Caco-2 (cell line): ENCODE measurements at regions of chr7 and their contacts with region 1.

Region 1: GRCh38 chr7:46432666-46433065 is 511.6 kb upstream of the IGFBP3 start:
- DNase-seq: no peak
- H3K4me3 ChIP-seq: no peak overlapping the region
- H3K4me3 Mint-ChIP-seq: no peak overlapping the region
- H3K27ac Mint-ChIP-seq: no peak overlapping the region
- H3K4me1 ChIP-seq: no peaks in the 10 kb centered on the region
- H3K4me1 Mint-ChIP-seq: no peaks in the 10 kb centered on the region
- H3K27me3 ChIP-seq: no peaks in the 10 kb centered on the region; the same call in 1 of the 2 replicates
- H3K27me3 Mint-ChIP-seq: no peaks in the 10 kb centered on the region
- CTCF ChIP-seq: no peak

Region 2: GRCh38 chr7:46244757-46245156 is 187.9 kb before region 1 on chr7:
- CTCF ChIA-PET with region 1: no interaction called
- POLR2A ChIA-PET with region 1: no interaction called
- intact Hi-C with region 1: no loop called
- DNase-seq: no peak
- H3K4me3 ChIP-seq: no peak overlapping the region
- H3K4me3 Mint-ChIP-seq: no peak overlapping the region
- H3K27ac Mint-ChIP-seq: no peak overlapping the region
- H3K4me1 ChIP-seq: no peaks in the 10 kb centered on the region
- H3K4me1 Mint-ChIP-seq: peaks cover 5% of the 10 kb centered on the region
- H3K27me3 ChIP-seq: no peaks in the 10 kb centered on the region
- H3K27me3 Mint-ChIP-seq: no peaks in the 10 kb centered on the region
- CTCF ChIP-seq: no peak

Region 3: GRCh38 chr7:46369933-46370654 is 62.6 kb before region 1 on chr7:
- CTCF ChIA-PET with region 1: no interaction called
- POLR2A ChIA-PET with region 1: no interaction called
- intact Hi-C with region 1: loop called (anchors 10 kb)
- DNase-seq: no peak
- H3K4me3 ChIP-seq: no peak overlapping the region
- H3K4me3 Mint-ChIP-seq: no peak overlapping the region
- H3K27ac Mint-ChIP-seq: no peak overlapping the region
- H3K4me1 ChIP-seq: no peaks in the 10 kb centered on the region
- H3K4me1 Mint-ChIP-seq: no peaks in the 10 kb centered on the region
- H3K27me3 ChIP-seq: no peaks in the 10 kb centered on the region
- H3K27me3 Mint-ChIP-seq: peaks cover 3% of the 10 kb centered on the region
- CTCF ChIP-seq: no peak

Region 4: GRCh38 chr7:46444266-46444665 is 11.6 kb after region 1 on chr7:
- CTCF ChIA-PET with region 1: no interaction called
- POLR2A ChIA-PET with region 1: no interaction called
- intact Hi-C with region 1: no loop called
- DNase-seq: no peak
- H3K4me3 ChIP-seq: no peak overlapping the region
- H3K4me3 Mint-ChIP-seq: no peak overlapping the region
- H3K27ac Mint-ChIP-seq: no peak overlapping the region
- H3K4me1 ChIP-seq: no peaks in the 10 kb centered on the region
- H3K4me1 Mint-ChIP-seq: no peaks in the 10 kb centered on the region
- H3K27me3 ChIP-seq: no peaks in the 10 kb centered on the region
- H3K27me3 Mint-ChIP-seq: peaks cover 2% of the 10 kb centered on the region
- CTCF ChIP-seq: no peak